ENCODE measurements at regions of chrX and their contacts with region 1.

Region 1: DNA sequence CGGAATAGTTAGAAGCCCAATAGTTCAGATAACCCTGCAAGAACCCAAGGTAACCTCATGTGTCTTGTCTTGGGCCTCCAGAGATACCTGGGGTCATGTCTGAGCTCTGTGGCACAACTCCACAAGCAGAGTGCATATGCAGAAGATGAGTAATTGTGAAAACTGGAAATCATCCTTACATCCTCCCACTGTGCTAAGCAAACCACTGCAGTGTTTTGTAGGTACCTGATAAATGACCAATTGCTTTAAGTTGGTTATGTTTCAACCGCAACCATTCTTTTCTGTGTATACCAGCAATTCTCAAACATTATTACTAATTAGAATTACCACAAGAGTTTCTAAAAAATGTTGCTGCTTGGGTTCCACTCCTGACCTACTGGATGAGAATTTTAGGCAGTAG is 73.2 kb downstream of the CBLL2 start:
- DNase-seq: no peak
- H3K4me3 ChIP-seq: no peak overlapping the region
- H3K27ac ChIP-seq: no peak overlapping the region
- H3K4me1 ChIP-seq: no peaks in the 10 kb centered on the region
- H3K27me3 ChIP-seq: no peaks in the 10 kb centered on the region
- CTCF ChIP-seq: no peak

Region 2: GRCh38 chrX:21839334-21840192 is 506.3 kb before region 1 on chrX and contains the start of gene MBTPS2:
- CTCF ChIA-PET with region 1: interaction called, 18 read pairs
- POLR2A ChIA-PET with region 1: no interaction called
- intact Hi-C with region 1: no loop called
- DNase-seq: peak; percentile 71 to 79
- H3K4me3 ChIP-seq: peak within 1 kb of the TSS; percentile 89
- H3K27ac ChIP-seq: peak within 1 kb of the TSS; percentile 67
- H3K4me1 ChIP-seq: no peaks in the 10 kb centered on the region; the same call in 1 of the 2 replicates
- H3K27me3 ChIP-seq: no peaks in the 10 kb centered on the region
- CTCF ChIP-seq: peak; percentile 34; the same call in 1 of the 2 replicates
- total RNA-seq, gene MBTPS2: 12.7 and 16.9 TPM in 2 replicates

Region 3: DNA sequence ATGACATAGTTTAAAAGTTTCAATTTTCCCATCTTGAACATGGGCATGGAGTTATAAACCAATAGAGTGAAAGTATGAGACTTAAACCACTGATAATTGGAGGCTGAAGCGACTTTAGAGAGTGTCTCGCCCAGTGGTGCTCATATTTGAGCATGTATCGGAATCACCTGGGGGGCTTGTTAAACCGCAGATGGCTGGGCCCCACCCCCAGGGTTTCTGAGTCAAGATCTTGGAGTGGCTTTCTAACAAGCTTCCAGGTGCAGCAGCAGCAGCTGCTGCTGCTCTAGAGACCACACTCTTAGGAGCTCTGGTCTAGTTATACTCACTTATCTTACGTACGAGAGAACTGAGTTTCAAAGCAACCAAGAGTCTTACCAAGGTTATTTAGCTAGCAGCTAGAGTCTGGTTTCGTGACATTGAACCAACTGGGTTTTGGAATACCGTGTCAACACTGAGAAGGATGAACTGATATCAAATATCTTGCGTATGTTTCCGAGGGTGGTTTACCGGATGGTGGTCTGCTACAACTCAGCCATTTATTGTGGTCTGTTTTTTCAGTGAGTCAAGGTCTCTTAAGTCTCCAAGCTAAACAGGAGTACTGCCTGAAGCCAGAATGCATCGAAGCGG is 307.9 kb before region 1 on chrX:
- CTCF ChIA-PET with region 1: no interaction called
- POLR2A ChIA-PET with region 1: interaction called, 26 read pairs
- intact Hi-C with region 1: no loop called
- DNase-seq: no peak
- H3K4me3 ChIP-seq: no peak overlapping the region
- H3K27ac ChIP-seq: no peak overlapping the region
- H3K4me1 ChIP-seq: peaks cover 8% of the 10 kb centered on the region; the same call in 1 of the 2 replicates
- H3K27me3 ChIP-seq: no peaks in the 10 kb centered on the region
- CTCF ChIP-seq: no peak

Region 4: DNA sequence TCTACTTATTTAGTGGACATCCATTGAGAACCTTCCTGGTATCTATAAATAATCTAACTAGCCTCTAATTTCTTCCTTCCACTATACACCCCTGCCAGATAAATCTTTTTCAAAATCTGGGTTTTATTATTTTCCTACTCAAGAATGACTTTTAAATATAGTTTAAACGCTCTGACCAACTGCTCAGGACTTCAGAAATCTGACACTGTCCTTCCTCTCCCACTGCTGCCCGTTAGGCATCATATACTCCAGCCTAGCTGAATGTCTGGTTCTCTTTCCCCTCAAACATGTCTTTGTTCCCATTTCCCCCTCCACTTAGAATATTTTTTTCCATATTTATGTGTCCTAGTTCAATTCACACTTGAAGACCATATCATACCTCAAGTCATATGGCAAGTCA is 108.4 kb before region 1 on chrX:
- CTCF ChIA-PET with region 1: no interaction called
- POLR2A ChIA-PET with region 1: no interaction called
- intact Hi-C with region 1: no loop called
- DNase-seq: no peak
- H3K4me3 ChIP-seq: no peak overlapping the region
- H3K27ac ChIP-seq: no peak overlapping the region
- H3K4me1 ChIP-seq: no peaks in the 10 kb centered on the region
- H3K27me3 ChIP-seq: no peaks in the 10 kb centered on the region
- CTCF ChIP-seq: no peak

Region 5: GRCh38 chrX:22278374-22278773 is 67.5 kb before region 1 on chrX:
- CTCF ChIA-PET with region 1: no interaction called
- POLR2A ChIA-PET with region 1: no interaction called
- intact Hi-C with region 1: no loop called
- DNase-seq: no peak
- H3K4me3 ChIP-seq: no peak overlapping the region
- H3K27ac ChIP-seq: no peak overlapping the region
- H3K4me1 ChIP-seq: no peaks in the 10 kb centered on the region
- H3K27me3 ChIP-seq: no peaks in the 10 kb centered on the region
- CTCF ChIP-seq: no peak; the same call in 1 of the 2 replicates

Region 6: DNA sequence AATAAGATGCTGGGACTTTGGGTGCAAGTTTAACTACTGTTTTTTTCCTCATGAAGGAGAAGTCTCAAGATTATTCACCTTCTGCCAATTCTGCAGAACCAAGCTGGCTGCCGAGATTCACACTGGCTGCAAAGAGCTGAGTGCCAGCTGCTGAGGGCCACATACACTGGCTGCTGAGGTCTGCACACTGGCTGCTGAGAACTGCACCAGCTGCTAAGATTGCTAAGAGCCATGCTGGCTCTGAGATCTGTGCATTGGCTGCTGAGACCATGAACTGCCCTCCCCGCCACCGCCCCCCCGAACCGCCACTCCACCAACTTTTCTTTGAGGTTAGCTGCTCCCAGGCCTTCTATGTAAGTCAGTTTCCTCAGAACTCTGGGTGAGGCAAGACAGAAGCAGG is 257.2 kb after region 1 on chrX:
- CTCF ChIA-PET with region 1: no interaction called
- POLR2A ChIA-PET with region 1: no interaction called
- intact Hi-C with region 1: no loop called
- DNase-seq: no peak
- H3K4me3 ChIP-seq: no peak overlapping the region
- H3K27ac ChIP-seq: no peak overlapping the region
- H3K4me1 ChIP-seq: no peaks in the 10 kb centered on the region
- H3K27me3 ChIP-seq: no peaks in the 10 kb centered on the region
- CTCF ChIP-seq: no peak

Measured in PC-9 (cell line).